PC-3 (cell line): ENCODE measurements at regions of chr12 and their contacts with region 1.

Region 1: GRCh38 chr12:68446893-68447796 is 115.0 kb upstream of the MDM1 start:
- DNase-seq: no peak
- ATAC-seq: no peak
- H3K4me3 ChIP-seq: no peak overlapping the region
- H3K27ac ChIP-seq: no peak overlapping the region
- H3K4me1 ChIP-seq: 0 out of 2 replicates have a peak, but pooled peaks cover 8% of the 10 kb centered on the region
- H3K27me3 ChIP-seq: no peaks in the 10 kb centered on the region
- CTCF ChIP-seq: no peak

Region 2: GRCh38 chr12:68200854-68201253 is 246.3 kb before region 1 on chr12:
- CTCF ChIA-PET with region 1: no interaction called
- POLR2A ChIA-PET with region 1: no interaction called
- intact Hi-C with region 1: no loop called
- DNase-seq: no peak
- ATAC-seq: no peak
- H3K4me3 ChIP-seq: no peak overlapping the region
- H3K27ac ChIP-seq: no peak overlapping the region
- H3K4me1 ChIP-seq: no peaks in the 10 kb centered on the region
- H3K27me3 ChIP-seq: peaks cover 69% of the 10 kb centered on the region
- CTCF ChIP-seq: no peak

Region 3: DNA sequence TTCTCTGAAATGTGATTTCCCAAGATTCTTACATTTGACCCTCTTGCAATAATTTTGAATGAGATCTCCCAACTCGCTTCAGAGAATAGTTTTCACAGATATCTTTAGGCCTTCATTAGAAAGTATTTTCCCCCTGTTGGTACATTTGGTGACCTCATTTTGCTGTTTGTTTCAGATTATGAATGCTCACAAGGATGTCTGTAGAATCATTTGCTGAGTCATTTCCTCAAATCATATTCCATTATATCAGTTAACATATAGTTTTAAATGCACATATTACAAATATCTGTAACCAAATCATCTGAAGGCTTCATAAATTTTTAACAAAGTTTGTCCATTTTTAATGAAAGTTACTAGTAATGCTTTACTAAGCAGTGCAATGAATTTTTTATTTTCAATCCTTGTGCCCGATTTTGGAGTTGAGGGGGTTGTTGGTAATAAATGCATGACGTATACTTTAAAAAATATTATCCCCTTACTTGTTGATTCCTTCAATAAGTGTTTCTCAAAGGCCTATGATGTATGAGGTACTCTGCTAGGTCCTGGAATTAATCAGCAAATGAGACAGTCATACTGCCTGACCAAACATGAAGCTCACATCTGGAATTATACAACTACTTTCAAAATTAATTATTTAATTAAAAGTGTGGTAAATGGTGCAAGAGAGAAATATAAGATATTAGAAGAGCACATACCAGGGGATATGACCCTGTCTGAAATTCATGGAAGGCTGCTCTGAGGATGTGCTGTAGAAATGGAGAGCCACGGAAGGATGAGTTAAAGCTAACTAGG is 36.6 kb after region 1 on chr12:
- CTCF ChIA-PET with region 1: no interaction called
- POLR2A ChIA-PET with region 1: interaction called, 19 read pairs
- intact Hi-C with region 1: no loop called
- DNase-seq: peak; percentile 55
- ATAC-seq: peak; percentile 70
- H3K4me3 ChIP-seq: no peak overlapping the region
- H3K27ac ChIP-seq: peak overlapping the region; percentile 46
- H3K4me1 ChIP-seq: peaks cover 24% of the 10 kb centered on the region
- H3K27me3 ChIP-seq: no peaks in the 10 kb centered on the region
- CTCF ChIP-seq: no peak